Vagina (tissue), 2 donors: ENCODE measurements at regions of chr1 and their contacts with region 1.

Region 1: GRCh38 chr1:30718636-30719405 is 4.6 kb downstream of the MATN1 start:
- DNase-seq: peak in 1 of 2 donors; percentile 99
- H3K4me3 ChIP-seq: peak overlapping the region; percentile 54 to 73
- H3K27ac ChIP-seq: peak overlapping the region; percentile 99
- H3K4me1 ChIP-seq: peaks cover 11% of the 10 kb centered on the region
- H3K27me3 ChIP-seq: no peaks in the 10 kb centered on the region
- CTCF ChIP-seq: peak; percentile 94 to 100 (median 99)
- POLR2A ChIP-seq: peak in 1 of 2 donors; percentile 96

Region 2: DNA sequence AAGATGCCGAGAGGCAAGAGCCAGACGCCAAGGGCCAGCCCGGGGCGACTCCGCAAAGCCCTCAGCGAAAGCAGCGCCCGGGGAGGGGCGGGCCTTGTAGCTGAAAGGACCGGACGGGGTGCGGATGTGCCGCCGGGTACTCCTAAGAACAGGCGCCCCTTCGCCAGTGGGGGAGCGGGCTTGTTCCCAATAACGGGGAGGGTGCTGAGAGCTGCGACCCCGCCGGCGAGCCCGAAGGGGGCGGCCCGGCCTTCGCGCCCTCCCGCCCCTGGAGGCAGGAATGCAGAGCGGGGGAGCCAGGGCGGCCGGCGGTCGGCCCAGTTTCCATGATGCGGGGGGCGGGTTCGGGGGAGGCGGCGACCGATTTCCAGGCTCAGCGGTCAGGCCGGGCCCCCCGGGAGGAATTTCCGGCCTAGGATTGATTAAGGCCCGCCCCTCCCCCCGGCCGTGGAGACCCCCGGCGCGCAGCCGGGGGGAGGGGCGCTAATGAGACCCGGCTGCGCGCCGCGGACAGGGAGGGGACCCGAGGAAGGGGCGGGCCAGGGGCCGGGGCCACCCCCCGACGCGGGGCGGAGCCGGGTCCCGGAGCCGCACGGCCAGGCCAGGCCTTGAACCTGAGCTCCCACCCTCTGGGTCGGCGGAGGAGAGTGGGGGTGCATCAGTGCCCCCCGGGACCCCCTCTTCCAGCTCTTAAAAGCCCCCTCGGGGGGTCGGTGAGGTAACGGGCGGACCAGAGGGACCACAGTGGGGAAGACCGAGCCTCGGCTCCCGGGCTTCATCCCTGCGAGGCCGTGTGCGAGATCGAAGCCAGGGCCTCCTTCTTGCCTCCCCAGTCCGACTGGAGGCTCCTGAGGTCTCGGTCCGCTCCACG is 1594.2 kb before region 1 on chr1:
- intact Hi-C with region 1: loop called (anchors 5 kb)
- DNase-seq: peak in 1 of 2 donors; percentile 93
- H3K4me3 ChIP-seq: peak overlapping the region; percentile 67 to 75
- H3K27ac ChIP-seq: peak overlapping the region; percentile 94
- H3K4me1 ChIP-seq: peaks cover 56% of the 10 kb centered on the region
- H3K27me3 ChIP-seq: no peaks in the 10 kb centered on the region
- CTCF ChIP-seq: peak; percentile 43 to 99 (median 59)
- POLR2A ChIP-seq: peak; percentile 72 to 83

Region 3: GRCh38 chr1:30779294-30780071 is 60.7 kb after region 1 on chr1:
- intact Hi-C with region 1: loop called (anchors 2 kb)
- DNase-seq: no peak
- H3K4me3 ChIP-seq: no peak overlapping the region
- H3K27ac ChIP-seq: no peak overlapping the region
- H3K4me1 ChIP-seq: peaks cover 9% of the 10 kb centered on the region
- H3K27me3 ChIP-seq: no peaks in the 10 kb centered on the region
- CTCF ChIP-seq: peak; percentile 89 to 99 (median 98)
- POLR2A ChIP-seq: no peak

Region 4: GRCh38 chr1:30911046-30911954 is 192.5 kb after region 1 on chr1:
- intact Hi-C with region 1: loop called (anchors 5 kb)
- DNase-seq: no peak
- H3K4me3 ChIP-seq: no peak overlapping the region
- H3K27ac ChIP-seq: peak overlapping the region; percentile 16
- H3K4me1 ChIP-seq: peaks cover 35% of the 10 kb centered on the region
- H3K27me3 ChIP-seq: no peaks in the 10 kb centered on the region
- CTCF ChIP-seq: peak; percentile 85 to 96 (median 91)
- POLR2A ChIP-seq: no peak